Heart right ventricle (tissue), 16 donors: ENCODE measurements at regions of chr4 and their contacts with region 1.

Region 1: DNA sequence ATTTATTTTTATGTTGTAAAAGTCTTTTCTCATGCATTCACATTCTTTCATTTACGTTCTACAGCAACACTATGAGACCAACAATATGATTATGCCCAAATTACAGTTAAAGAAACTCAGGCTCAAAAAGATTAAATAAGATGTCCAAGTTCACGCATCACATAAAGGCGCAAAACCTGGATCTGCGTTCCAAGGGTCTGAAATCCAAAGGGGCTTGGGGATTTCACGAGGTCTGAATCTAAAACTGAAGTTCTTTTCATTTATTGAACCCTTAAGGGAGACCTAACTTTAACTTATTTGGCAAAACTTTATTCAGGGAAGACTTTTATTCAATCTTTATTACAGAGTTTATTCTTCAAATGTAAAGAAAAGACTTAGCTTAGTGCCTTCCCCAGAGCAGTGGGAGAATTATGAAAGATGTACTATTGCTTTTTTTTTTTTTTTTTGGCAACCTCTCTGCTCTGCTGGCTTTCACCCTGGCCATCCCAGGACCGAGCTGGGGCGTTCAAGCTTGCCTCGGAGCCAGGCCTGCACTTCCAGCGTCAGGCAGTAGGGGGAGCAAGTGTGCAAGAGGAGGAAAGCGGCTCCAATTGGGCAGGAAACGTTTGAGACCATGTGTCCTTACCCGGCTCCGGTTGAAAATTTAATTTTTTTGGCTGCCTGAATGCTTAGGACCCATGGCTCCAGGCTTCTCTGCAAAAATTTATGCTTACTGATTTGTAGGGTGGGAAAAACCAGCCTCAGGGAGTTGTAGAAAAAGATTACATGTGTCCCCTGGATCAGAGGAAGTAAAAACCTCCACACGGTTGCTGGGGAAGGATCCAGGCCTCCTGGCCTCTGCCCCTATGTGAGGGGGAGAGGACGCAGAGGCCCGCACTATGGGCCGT is 344.3 kb upstream of the KLF3 start:
- DNase-seq: peak; percentile 96 to 97
- ATAC-seq: peak; percentile 74 to 91 (median 85)
- H3K4me3 ChIP-seq: peak overlapping the region in 9 of 10 donors; percentile 22 to 45 (median 37)
- H3K27ac ChIP-seq: peak overlapping the region; percentile 14 to 92 (median 86)
- H3K4me1 ChIP-seq: peaks cover 6 to 48% (median 26%) of the 10 kb centered on the region in 9 donors
- H3K27me3 ChIP-seq: no peaks in the 10 kb centered on the region
- CTCF ChIP-seq: peak; percentile 99 to 100 (median 99)

Region 2: GRCh38 chr4:38062088-38062893 is 257.4 kb before region 1 on chr4:
- intact Hi-C with region 1: loop called in 7 of 10 experiments (anchors 5 to 10 kb)
- DNase-seq: peak; percentile 74 to 87
- ATAC-seq: peak; percentile 52 to 89 (median 79)
- H3K4me3 ChIP-seq: peak overlapping the region in 8 of 10 donors; percentile 21 to 54 (median 42)
- H3K27ac ChIP-seq: peak overlapping the region in 9 of 10 donors; percentile 18 to 81 (median 75)
- H3K4me1 ChIP-seq: peaks cover 0 to 46% (median 26%) of the 10 kb centered on the region in 9 donors
- H3K27me3 ChIP-seq: no peaks in the 10 kb centered on the region
- CTCF ChIP-seq: peak; percentile 74 to 95 (median 87)

Region 3: GRCh38 chr4:38179690-38180377 is 139.9 kb before region 1 on chr4:
- intact Hi-C with region 1: loop called (anchors 2 to 5 kb)
- DNase-seq: peak; percentile 49 to 71
- ATAC-seq: peak; percentile 32 to 76 (median 61)
- H3K4me3 ChIP-seq: no peak overlapping the region
- H3K27ac ChIP-seq: peak overlapping the region in 1 of 10 donors; percentile 1
- H3K4me1 ChIP-seq: peaks cover 2 to 53% (median 21%) of the 10 kb centered on the region in 9 donors
- H3K27me3 ChIP-seq: no peaks in the 10 kb centered on the region
- CTCF ChIP-seq: peak; percentile 89 to 97 (median 94)

Region 4: GRCh38 chr4:38461342-38461741 is 141.6 kb after region 1 on chr4:
- intact Hi-C with region 1: loop called in 1 of 10 experiments (anchors 10 kb)
- DNase-seq: no peak
- ATAC-seq: no peak
- H3K4me3 ChIP-seq: no peak overlapping the region
- H3K27ac ChIP-seq: no peak overlapping the region
- H3K4me1 ChIP-seq: peaks cover 0 to 10% (median 0%) of the 10 kb centered on the region in 9 donors
- H3K27me3 ChIP-seq: no peaks in the 10 kb centered on the region
- CTCF ChIP-seq: no peak

Region 5: DNA sequence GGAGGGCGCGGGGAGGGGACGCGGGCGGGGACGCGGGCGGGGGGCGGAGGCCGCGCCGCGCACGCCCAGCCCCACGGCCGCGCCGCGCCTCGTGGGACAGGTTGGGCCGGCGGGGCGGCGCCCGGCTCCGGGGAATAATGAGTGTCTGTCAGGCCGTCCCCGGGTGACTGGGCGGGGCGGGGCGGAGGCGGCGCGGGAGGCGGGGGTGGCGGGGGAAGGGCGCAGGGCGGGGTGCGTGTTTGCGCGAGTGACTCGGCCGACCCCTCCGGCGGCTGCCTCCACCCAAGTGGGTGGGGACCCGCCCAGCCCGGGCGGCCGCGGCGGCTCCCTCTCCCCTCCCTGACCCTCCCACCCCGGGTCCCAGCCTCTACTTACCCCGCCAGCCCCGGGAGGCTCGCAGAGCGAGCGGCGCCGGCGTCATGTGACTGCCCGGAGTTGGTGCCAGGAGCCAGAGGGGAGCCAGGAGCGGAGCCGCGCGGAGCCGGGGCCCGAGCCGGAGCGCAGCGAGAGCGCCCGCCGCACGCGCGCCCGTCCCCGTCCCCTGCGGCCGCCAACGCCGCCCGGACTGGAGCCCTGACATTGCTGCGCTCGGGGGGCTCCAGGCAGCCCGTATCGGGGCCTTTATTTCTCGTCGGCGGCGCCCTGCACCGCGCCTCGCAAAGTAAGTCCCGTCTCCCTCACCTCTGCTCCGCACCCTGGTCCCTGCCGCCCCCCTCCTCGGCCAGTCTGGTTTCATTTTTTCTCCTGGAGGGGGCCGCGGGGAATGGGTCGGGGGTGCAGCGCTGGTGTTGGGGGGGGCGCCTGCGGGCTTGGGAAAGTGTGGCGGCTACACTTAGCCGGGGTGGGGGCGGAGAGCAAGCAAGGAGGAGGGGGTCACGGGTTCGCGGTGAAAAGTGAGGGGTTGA is 344.4 kb after region 1 on chr4 and contains the start of gene KLF3:
- intact Hi-C with region 1: loop called in 3 of 10 experiments (anchors 2 kb)
- DNase-seq: peak; percentile 93 to 97
- ATAC-seq: peak; percentile 82 to 94 (median 86)
- H3K4me3 ChIP-seq: peak within 1 kb of the TSS; percentile 72 to 94 (median 90)
- H3K27ac ChIP-seq: peak within 1 kb of the TSS; percentile 99 to 100 (median 100)
- H3K4me1 ChIP-seq: peaks cover under 1 to 57% (median 45%) of the 10 kb centered on the region in 9 donors
- H3K27me3 ChIP-seq: no peaks in the 10 kb centered on the region
- CTCF ChIP-seq: no peak
- total RNA-seq, gene KLF3: 14.1 to 25.1 (median 20.0) TPM